CD8-positive, alpha-beta memory T cell (primary cell): ENCODE measurements at regions of chr17 and their contacts with region 1.

Region 1: DNA sequence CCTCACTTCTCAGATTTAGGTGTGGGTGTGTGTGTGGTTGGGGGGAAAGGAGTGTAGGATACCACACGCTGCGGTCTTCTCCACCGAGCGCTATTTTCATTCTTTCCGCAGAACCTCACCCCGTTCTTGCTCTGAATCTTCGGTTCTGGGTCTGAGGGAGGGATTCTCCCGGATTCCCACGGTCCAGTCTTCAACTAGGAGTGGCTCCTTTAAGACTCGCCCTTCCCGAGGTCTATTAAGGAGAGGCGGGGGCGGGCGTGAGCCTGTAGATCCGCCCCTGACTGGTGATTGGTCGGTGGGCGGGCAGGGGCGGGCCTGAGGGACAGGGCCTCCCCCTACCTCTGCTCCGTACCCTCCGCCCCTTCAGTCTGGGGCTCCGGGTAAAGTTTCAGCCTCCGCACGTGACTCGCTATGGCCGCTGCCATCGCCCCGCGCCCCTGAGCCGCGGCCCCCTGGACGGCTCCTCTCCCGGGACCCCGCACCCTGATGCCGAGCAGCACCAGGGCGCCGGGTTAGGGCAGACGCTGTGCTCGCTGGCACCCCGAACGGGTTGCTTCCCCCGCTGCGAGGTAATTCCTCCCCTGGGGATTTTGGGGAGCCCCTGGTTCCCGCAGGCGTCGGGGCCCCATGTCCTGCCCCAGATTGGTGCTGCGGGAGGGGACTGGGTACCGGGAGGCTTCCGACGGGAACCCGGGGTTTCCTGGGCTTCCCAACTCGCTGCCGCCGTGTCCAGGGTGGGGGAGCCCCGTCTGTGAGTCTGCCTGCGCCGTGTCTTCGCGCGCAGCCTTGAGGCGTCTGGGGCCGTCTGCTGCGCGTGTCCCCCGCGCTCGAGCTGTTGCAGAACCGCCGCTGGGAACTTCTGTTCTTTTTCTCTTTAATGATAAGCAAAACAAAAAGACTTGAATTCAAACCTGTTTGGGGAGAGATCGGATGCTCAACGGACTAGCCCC is 9.2 kb downstream of the RARA start:
- DNase-seq: peak; percentile 89 to 93 (median 90)
- H3K4me3 ChIP-seq: peak overlapping the region; percentile 92
- H3K4me3 Mint-ChIP-seq: peak overlapping the region; percentile 86 to 98 (median 98)
- H3K27ac ChIP-seq: peak overlapping the region; percentile 84
- H3K27ac Mint-ChIP-seq: peak overlapping the region; percentile 98 to 100 (median 100)
- H3K4me1 ChIP-seq: peaks cover 70% of the 10 kb centered on the region
- H3K4me1 Mint-ChIP-seq: peaks cover 57 to 91% (median 86%) of the 10 kb centered on the region in 3 donors
- H3K27me3 ChIP-seq: no peaks in the 10 kb centered on the region
- H3K27me3 Mint-ChIP-seq: peaks cover 0 to 7% of the 10 kb centered on the region in 2 donors

Region 2: DNA sequence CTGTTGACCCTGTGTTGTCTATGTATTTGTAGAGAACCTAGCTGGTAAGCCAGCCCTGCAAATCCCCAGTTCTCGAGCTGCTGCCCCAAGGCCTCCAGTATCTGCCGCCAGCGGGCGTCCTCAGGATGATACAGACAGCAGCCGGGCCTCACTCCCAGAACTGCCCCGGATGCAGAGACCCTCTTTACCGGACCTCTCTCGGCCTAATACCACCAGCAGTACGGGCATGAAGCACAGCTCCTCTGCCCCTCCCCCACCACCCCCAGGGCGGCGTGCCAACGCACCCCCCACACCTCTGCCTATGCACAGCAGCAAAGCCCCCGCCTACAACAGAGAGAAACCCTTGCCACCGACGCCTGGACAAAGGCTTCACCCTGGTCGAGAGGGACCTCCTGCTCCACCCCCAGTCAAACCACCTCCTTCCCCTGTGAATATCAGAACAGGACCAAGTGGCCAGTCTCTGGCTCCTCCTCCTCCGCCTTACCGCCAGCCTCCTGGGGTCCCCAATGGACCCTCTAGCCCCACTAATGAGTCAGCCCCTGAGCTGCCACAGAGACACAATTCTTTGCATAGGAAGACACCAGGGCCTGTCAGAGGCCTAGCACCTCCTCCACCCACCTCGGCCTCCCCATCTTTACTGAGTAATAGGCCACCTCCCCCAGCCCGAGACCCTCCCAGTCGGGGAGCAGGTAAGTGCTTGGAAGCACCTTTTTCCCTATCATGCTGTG is 53.5 kb before region 1 on chr17:
- CTCF ChIA-PET with region 1: no interaction called
- POLR2A ChIA-PET with region 1: no interaction called
- DNase-seq: no peak
- H3K4me3 ChIP-seq: no peak overlapping the region
- H3K4me3 Mint-ChIP-seq: no peak overlapping the region
- H3K27ac ChIP-seq: no peak overlapping the region
- H3K27ac Mint-ChIP-seq: peak overlapping the region in 2 of 8 donors; percentile 38 to 72
- H3K4me1 ChIP-seq: no peaks in the 10 kb centered on the region
- H3K4me1 Mint-ChIP-seq: peaks cover 0 to 3% (median 0%) of the 10 kb centered on the region in 3 donors
- H3K27me3 ChIP-seq: no peaks in the 10 kb centered on the region
- H3K27me3 Mint-ChIP-seq: no peaks in the 10 kb centered on the region

Region 3: GRCh38 chr17:40303009-40303657 is 15.0 kb before region 1 on chr17:
- CTCF ChIA-PET with region 1: interaction called, 83 read pairs
- POLR2A ChIA-PET with region 1: interaction called, 30 read pairs
- DNase-seq: peak in 4 of 5 donors; percentile 44 to 66 (median 60)
- H3K4me3 ChIP-seq: no peak overlapping the region
- H3K4me3 Mint-ChIP-seq: peak overlapping the region in 1 of 7 donors; percentile 1
- H3K27ac ChIP-seq: no peak overlapping the region
- H3K27ac Mint-ChIP-seq: peak overlapping the region in 7 of 8 donors; percentile 2 to 80 (median 51)
- H3K4me1 ChIP-seq: peaks cover 29% of the 10 kb centered on the region
- H3K4me1 Mint-ChIP-seq: peaks cover 11 to 17% (median 16%) of the 10 kb centered on the region in 3 donors
- H3K27me3 ChIP-seq: no peaks in the 10 kb centered on the region
- H3K27me3 Mint-ChIP-seq: no peaks in the 10 kb centered on the region

Region 4: GRCh38 chr17:40331743-40332641 is 13.8 kb after region 1 on chr17:
- CTCF ChIA-PET with region 1: interaction called, 33 read pairs
- POLR2A ChIA-PET with region 1: interaction called, 4 read pairs
- DNase-seq: no peak
- H3K4me3 ChIP-seq: no peak overlapping the region
- H3K4me3 Mint-ChIP-seq: peak overlapping the region in 3 of 7 donors; percentile 26 to 41 (median 35)
- H3K27ac ChIP-seq: no peak overlapping the region
- H3K27ac Mint-ChIP-seq: peak overlapping the region in 5 of 8 donors; percentile 71 to 98 (median 79)
- H3K4me1 ChIP-seq: peaks cover 77% of the 10 kb centered on the region
- H3K4me1 Mint-ChIP-seq: peaks cover 65 to 85% (median 76%) of the 10 kb centered on the region in 3 donors
- H3K27me3 ChIP-seq: no peaks in the 10 kb centered on the region
- H3K27me3 Mint-ChIP-seq: peaks cover 0 to 3% of the 10 kb centered on the region in 2 donors

Region 5: GRCh38 chr17:40340880-40341807 is 23.0 kb after region 1 on chr17:
- CTCF ChIA-PET with region 1: interaction called, 41 read pairs
- POLR2A ChIA-PET with region 1: interaction called, 17 read pairs
- DNase-seq: peak; percentile 86 to 94 (median 88)
- H3K4me3 ChIP-seq: peak overlapping the region; percentile 37
- H3K4me3 Mint-ChIP-seq: peak overlapping the region; percentile 60 to 92 (median 83)
- H3K27ac ChIP-seq: peak overlapping the region; percentile 67
- H3K27ac Mint-ChIP-seq: peak overlapping the region; percentile 92 to 98 (median 97)
- H3K4me1 ChIP-seq: peaks cover 66% of the 10 kb centered on the region
- H3K4me1 Mint-ChIP-seq: peaks cover 66 to 84% (median 73%) of the 10 kb centered on the region in 3 donors
- H3K27me3 ChIP-seq: no peaks in the 10 kb centered on the region
- H3K27me3 Mint-ChIP-seq: no peaks in the 10 kb centered on the region

Region 6: DNA sequence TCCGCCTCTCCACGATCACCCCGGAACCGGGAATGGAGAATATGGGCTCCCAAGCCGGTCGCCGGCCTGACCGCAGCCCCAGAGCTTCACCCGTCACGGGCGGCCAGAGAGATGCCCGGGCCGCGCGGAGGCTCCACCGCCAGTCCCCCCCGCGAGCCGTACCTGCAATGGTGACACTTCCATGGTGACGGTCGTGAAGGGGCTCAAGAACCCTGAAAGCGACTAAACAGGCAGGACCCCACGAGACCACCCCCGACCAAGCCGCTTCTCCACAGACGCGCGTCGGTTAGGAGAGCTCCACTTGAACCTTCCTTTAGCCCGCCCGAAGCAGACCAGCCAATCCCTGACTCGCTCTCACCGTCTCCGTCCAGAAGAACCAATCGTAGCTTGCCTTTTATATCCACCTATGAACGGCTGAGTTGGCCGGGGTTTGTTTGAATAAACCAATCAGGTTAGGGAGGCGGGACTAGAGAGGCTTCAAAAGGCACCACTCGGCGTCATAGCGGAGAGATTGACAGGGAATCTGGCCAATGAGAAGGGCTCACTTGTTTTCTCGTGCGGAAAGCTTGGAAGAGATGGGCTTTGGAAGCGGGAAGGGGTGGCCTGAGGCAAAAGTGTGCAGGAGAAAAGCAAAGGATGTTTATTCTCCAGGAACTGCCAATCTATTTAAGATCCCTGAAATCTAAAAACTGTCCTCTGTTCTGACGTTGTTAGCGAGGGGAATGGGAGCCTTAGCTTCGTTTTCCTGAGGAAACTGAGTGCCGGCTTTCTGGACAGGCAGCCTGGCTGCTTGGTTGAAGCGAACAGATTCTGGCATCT is 99.7 kb after region 1 on chr17 and contains the start of gene TOP2A:
- CTCF ChIA-PET with region 1: no interaction called
- POLR2A ChIA-PET with region 1: no interaction called
- DNase-seq: peak; percentile 84 to 98 (median 97)
- H3K4me3 ChIP-seq: peak within 1 kb of the TSS; percentile 98
- H3K4me3 Mint-ChIP-seq: peak within 1 kb of the TSS; percentile 86 to 96 (median 94)
- H3K27ac ChIP-seq: peak within 1 kb of the TSS; percentile 81
- H3K27ac Mint-ChIP-seq: peak within 1 kb of the TSS; percentile 59 to 93 (median 84)
- H3K4me1 ChIP-seq: peaks cover 10% of the 10 kb centered on the region
- H3K4me1 Mint-ChIP-seq: peaks cover 17 to 29% (median 23%) of the 10 kb centered on the region in 3 donors
- H3K27me3 ChIP-seq: no peaks in the 10 kb centered on the region
- H3K27me3 Mint-ChIP-seq: peaks cover 4 to 5% of the 10 kb centered on the region in 2 donors
- total RNA-seq, gene TOP2A: 138 to 143 TPM

Region 7: DNA sequence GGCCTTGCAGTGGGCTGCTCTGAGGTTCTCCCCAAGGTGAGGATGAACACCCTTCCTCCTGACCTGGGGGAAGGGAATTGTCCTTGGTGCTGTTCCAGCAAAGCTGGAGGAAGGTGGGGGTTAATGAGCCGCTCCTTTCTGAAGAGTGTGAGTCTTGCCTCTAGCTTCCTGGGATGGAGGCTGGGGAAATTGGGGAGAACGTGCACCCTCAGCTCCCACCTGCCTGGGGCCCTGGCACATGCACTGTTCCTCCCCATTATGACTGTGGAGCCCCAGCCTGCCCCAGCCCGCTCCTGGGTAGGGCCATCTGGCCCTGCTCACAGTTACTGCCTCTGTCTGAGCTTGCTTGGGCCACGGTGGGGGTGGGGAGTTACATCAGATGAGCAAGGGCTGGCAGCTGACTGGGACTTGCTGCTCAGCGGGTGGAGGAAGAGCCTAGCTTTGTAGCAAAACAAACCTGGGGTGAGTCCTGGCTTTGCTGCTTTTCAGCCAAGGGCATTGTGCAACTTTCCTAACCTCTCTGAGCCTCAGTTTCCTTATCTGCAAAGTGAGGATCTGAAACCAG is 172.2 kb after region 1 on chr17:
- CTCF ChIA-PET with region 1: no interaction called
- POLR2A ChIA-PET with region 1: no interaction called
- DNase-seq: no peak
- H3K4me3 ChIP-seq: no peak overlapping the region
- H3K4me3 Mint-ChIP-seq: peak overlapping the region in 1 of 7 donors; percentile 23
- H3K27ac ChIP-seq: no peak overlapping the region
- H3K27ac Mint-ChIP-seq: peak overlapping the region in 5 of 8 donors; percentile 12 to 83 (median 68)
- H3K4me1 ChIP-seq: peaks cover 41% of the 10 kb centered on the region
- H3K4me1 Mint-ChIP-seq: peaks cover 40 to 56% (median 54%) of the 10 kb centered on the region in 3 donors
- H3K27me3 ChIP-seq: no peaks in the 10 kb centered on the region
- H3K27me3 Mint-ChIP-seq: no peaks in the 10 kb centered on the region